PC-3 (cell line): ENCODE measurements at regions of chrX and their contacts with region 1.

Region 1: DNA sequence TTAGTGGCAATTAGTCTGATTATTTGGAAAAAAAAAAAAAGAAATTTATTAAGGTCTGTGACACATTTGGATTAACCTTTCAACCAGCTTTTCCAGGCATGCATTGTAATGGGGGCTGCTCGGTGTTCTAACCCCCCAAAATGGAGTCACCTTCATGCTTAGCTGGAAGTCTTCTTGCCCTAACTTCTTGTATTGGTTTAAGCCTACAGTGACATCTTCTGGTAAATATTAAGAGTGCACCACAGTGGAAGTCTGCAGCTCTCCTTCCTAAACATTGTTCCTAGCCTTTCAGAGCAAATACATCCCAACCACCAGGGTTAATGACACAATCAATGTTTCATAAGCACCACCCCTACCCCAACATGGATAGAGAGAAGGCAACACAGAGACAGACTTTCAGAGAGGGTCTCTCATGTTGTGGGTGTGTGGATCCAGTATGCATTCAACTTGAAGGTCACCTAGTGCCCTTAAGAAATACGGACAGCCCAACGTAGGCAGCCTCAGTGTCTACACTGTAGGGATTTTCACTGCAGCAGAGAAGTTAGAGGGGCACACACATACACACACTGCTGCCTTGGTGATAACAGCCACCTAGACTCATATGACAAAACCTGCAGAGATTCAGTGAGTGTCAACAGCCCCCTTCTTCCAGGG is 142.9 kb upstream of the MBNL3 start:
- DNase-seq: peak; percentile 55
- ATAC-seq: peak; percentile 65
- H3K4me3 ChIP-seq: no peak overlapping the region
- H3K27ac ChIP-seq: no peak overlapping the region
- H3K4me1 ChIP-seq: no peaks in the 10 kb centered on the region
- H3K27me3 ChIP-seq: no peaks in the 10 kb centered on the region
- CTCF ChIP-seq: peak; percentile 68

Region 2: DNA sequence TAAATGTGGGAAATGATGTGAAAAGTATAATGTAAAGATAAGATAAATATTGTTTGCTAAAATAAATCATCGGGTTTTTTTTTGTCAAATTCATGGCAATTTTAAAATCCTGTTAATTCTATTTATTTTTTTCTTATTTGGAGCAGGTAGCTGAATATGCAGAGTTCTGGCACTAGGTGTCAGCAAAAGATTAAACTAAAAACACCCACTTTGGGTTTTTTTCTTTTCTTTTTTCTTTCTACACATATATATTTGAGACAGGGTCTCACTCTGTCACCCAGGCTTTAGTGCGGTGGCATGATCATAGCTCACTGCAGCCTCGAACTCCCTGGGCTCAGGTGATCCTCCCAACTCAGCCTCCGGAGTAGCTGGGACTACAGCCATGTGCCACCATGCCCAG is 405.5 kb before region 1 on chrX:
- CTCF ChIA-PET with region 1: interaction called, 8 read pairs
- POLR2A ChIA-PET with region 1: no interaction called
- intact Hi-C with region 1: loop called (anchors 1 kb)
- DNase-seq: peak; percentile 34
- ATAC-seq: no peak
- H3K4me3 ChIP-seq: no peak overlapping the region
- H3K27ac ChIP-seq: no peak overlapping the region
- H3K4me1 ChIP-seq: no peaks in the 10 kb centered on the region
- H3K27me3 ChIP-seq: no peaks in the 10 kb centered on the region
- CTCF ChIP-seq: peak; percentile 59

Region 3: GRCh38 chrX:132292793-132293192 is 338.9 kb before region 1 on chrX:
- CTCF ChIA-PET with region 1: interaction called, 10 read pairs
- POLR2A ChIA-PET with region 1: no interaction called
- intact Hi-C with region 1: no loop called
- DNase-seq: peak; percentile 66
- ATAC-seq: peak; percentile 74
- H3K4me3 ChIP-seq: no peak overlapping the region
- H3K27ac ChIP-seq: no peak overlapping the region
- H3K4me1 ChIP-seq: no peaks in the 10 kb centered on the region
- H3K27me3 ChIP-seq: no peaks in the 10 kb centered on the region
- CTCF ChIP-seq: peak; percentile 75

Region 4: GRCh38 chrX:132677233-132677716 is 45.6 kb after region 1 on chrX:
- CTCF ChIA-PET with region 1: no interaction called
- POLR2A ChIA-PET with region 1: no interaction called
- intact Hi-C with region 1: no loop called
- DNase-seq: no peak
- ATAC-seq: no peak
- H3K4me3 ChIP-seq: no peak overlapping the region
- H3K27ac ChIP-seq: no peak overlapping the region
- H3K4me1 ChIP-seq: no peaks in the 10 kb centered on the region
- H3K27me3 ChIP-seq: no peaks in the 10 kb centered on the region
- CTCF ChIP-seq: no peak

Region 5: DNA sequence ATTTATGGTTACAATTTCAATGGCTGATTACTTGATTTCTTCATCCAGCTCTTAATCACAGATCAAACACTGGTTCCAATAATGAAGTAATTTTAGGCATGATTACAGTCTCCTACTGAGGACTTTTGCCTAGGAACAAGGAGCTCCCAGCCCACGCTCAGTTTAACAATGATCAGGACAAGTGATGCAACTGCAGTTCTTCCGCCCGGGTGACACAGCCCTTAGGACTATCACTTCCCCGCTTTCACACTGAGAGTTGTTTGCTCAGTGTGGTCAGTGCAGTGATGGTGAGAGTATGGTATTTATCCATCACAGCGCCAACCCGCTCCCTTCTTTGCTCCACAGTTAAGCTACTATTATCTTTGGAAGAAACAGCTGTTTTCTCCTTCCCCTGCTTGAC is 60.4 kb after region 1 on chrX:
- CTCF ChIA-PET with region 1: no interaction called
- POLR2A ChIA-PET with region 1: no interaction called
- intact Hi-C with region 1: no loop called
- DNase-seq: no peak
- ATAC-seq: no peak
- H3K4me3 ChIP-seq: no peak overlapping the region
- H3K27ac ChIP-seq: no peak overlapping the region
- H3K4me1 ChIP-seq: no peaks in the 10 kb centered on the region
- H3K27me3 ChIP-seq: no peaks in the 10 kb centered on the region
- CTCF ChIP-seq: no peak

Region 6: GRCh38 chrX:132716006-132716405 is 84.3 kb after region 1 on chrX:
- CTCF ChIA-PET with region 1: no interaction called
- POLR2A ChIA-PET with region 1: interaction called, 3 read pairs
- intact Hi-C with region 1: loop called (anchors 1 kb)
- DNase-seq: peak; percentile 10
- ATAC-seq: peak; percentile 33; the same call in 1 of the 2 replicates
- H3K4me3 ChIP-seq: no peak overlapping the region
- H3K27ac ChIP-seq: no peak overlapping the region
- H3K4me1 ChIP-seq: no peaks in the 10 kb centered on the region
- H3K27me3 ChIP-seq: no peaks in the 10 kb centered on the region
- CTCF ChIP-seq: peak; percentile 67

Region 7: GRCh38 chrX:132776486-132777210 is 144.9 kb after region 1 on chrX:
- CTCF ChIA-PET with region 1: no interaction called
- POLR2A ChIA-PET with region 1: no interaction called
- intact Hi-C with region 1: no loop called
- DNase-seq: no peak
- ATAC-seq: no peak
- H3K4me3 ChIP-seq: no peak overlapping the region
- H3K27ac ChIP-seq: no peak overlapping the region
- H3K4me1 ChIP-seq: peaks cover 9% of the 10 kb centered on the region; the same call in 1 of the 2 replicates
- H3K27me3 ChIP-seq: no peaks in the 10 kb centered on the region
- CTCF ChIP-seq: no peak

Region 8: GRCh38 chrX:132957211-132958090 is 325.7 kb after region 1 on chrX:
- CTCF ChIA-PET with region 1: no interaction called
- POLR2A ChIA-PET with region 1: no interaction called
- intact Hi-C with region 1: loop called (anchors 10 kb)
- DNase-seq: no peak
- ATAC-seq: peak; percentile 25
- H3K4me3 ChIP-seq: peak overlapping the region; percentile 71
- H3K27ac ChIP-seq: no peak overlapping the region
- H3K4me1 ChIP-seq: peaks cover 54% of the 10 kb centered on the region
- H3K27me3 ChIP-seq: no peaks in the 10 kb centered on the region
- CTCF ChIP-seq: no peak

Region 9: DNA sequence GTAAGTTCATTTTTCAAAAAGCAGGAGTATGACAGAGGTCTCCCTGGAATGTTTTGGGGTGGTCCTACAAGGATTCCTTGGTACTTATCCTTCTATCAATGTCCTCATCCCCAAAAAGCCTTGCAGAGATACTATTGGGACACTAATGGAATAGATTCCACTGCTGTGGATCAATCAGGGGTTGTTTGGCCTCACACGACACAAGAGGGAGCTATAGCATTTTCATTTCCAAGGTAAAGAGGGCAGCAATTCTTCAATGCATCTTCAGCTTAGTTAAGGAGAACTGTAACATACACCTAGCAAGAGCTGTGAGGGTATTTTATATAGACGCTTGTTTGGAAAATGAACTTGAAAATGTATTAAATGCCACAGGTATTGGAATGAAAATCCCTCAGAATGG is 414.3 kb after region 1 on chrX:
- CTCF ChIA-PET with region 1: no interaction called
- POLR2A ChIA-PET with region 1: no interaction called
- intact Hi-C with region 1: loop called (anchors 2 kb)
- DNase-seq: peak; percentile 60
- ATAC-seq: peak; percentile 76
- H3K4me3 ChIP-seq: no peak overlapping the region
- H3K27ac ChIP-seq: no peak overlapping the region
- H3K4me1 ChIP-seq: no peaks in the 10 kb centered on the region
- H3K27me3 ChIP-seq: no peaks in the 10 kb centered on the region
- CTCF ChIP-seq: peak; percentile 80

Region 10: GRCh38 chrX:133171962-133172708 is 540.4 kb after region 1 on chrX:
- CTCF ChIA-PET with region 1: no interaction called
- POLR2A ChIA-PET with region 1: no interaction called
- intact Hi-C with region 1: loop called (anchors 5 kb)
- DNase-seq: peak; percentile 65
- ATAC-seq: peak; percentile 87
- H3K4me3 ChIP-seq: no peak overlapping the region
- H3K27ac ChIP-seq: no peak overlapping the region
- H3K4me1 ChIP-seq: peaks cover 12% of the 10 kb centered on the region
- H3K27me3 ChIP-seq: no peaks in the 10 kb centered on the region
- CTCF ChIP-seq: peak; percentile 78